ENCODE measurements at regions of chr7 and their contacts with region 1.

Region 1: GRCh38 chr7:101244375-101245146 is at the start of gene FIS1:
- DNase-seq: peak; percentile 87
- H3K4me3 Mint-ChIP-seq: peak within 1 kb of the TSS; percentile 80
- H3K27ac Mint-ChIP-seq: peak within 1 kb of the TSS; percentile 97
- H3K4me1 Mint-ChIP-seq: peaks cover 5% of the 10 kb centered on the region
- H3K27me3 Mint-ChIP-seq: no peaks in the 10 kb centered on the region
- CTCF ChIP-seq: peak; percentile 76
- total RNA-seq, gene FIS1: 213 and 221 TPM in 2 replicates

Region 2: DNA sequence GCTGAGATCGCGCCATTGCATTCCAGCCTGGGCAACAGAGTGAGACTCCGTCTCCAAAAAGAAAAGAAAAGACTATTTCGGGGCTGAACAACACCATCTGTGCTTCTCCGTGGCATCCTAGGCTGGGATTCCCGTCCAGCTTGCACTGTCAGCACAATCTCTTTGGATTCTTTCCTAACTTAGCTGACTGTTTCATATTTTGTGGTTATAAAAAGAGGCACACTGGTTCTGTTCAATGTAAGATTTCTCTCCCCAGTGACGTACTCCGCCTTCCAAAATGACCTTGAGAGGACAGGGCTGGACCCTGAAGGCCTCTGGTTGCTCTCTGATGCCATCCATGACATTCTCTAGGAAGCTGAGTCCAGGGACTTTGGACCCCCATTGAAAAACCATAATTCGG is 17.8 kb before region 1 on chr7:
- CTCF ChIA-PET with region 1: interaction called, 12 read pairs
- POLR2A ChIA-PET with region 1: interaction called, 43 read pairs
- intact Hi-C with region 1: no loop called
- DNase-seq: no peak
- H3K4me3 Mint-ChIP-seq: no peak overlapping the region
- H3K27ac Mint-ChIP-seq: no peak overlapping the region
- H3K4me1 Mint-ChIP-seq: peaks cover 6% of the 10 kb centered on the region
- H3K27me3 Mint-ChIP-seq: no peaks in the 10 kb centered on the region
- CTCF ChIP-seq: no peak

Region 3: DNA sequence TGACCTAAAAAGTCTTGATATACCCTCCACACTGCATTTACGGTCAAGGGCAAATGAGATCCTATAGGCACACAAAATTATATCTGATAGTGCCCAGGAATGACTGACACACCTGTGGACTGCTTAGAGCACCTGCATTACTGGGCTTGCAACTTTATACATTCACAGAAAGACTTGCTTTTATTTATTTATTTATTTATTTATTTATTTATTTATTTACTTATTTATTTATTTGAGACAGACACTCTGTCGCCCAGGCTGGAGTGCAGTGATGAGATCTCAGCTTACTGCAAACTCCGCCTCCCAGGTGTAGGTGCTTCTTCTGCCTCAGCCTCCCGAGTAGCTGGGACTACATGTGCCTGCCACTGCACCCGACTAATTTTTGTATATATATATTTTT is 83.6 kb after region 1 on chr7:
- CTCF ChIA-PET with region 1: no interaction called
- POLR2A ChIA-PET with region 1: no interaction called
- intact Hi-C with region 1: no loop called
- DNase-seq: no peak
- H3K4me3 Mint-ChIP-seq: no peak overlapping the region
- H3K27ac Mint-ChIP-seq: no peak overlapping the region
- H3K4me1 Mint-ChIP-seq: no peaks in the 10 kb centered on the region
- H3K27me3 Mint-ChIP-seq: no peaks in the 10 kb centered on the region
- CTCF ChIP-seq: no peak

Region 4: DNA sequence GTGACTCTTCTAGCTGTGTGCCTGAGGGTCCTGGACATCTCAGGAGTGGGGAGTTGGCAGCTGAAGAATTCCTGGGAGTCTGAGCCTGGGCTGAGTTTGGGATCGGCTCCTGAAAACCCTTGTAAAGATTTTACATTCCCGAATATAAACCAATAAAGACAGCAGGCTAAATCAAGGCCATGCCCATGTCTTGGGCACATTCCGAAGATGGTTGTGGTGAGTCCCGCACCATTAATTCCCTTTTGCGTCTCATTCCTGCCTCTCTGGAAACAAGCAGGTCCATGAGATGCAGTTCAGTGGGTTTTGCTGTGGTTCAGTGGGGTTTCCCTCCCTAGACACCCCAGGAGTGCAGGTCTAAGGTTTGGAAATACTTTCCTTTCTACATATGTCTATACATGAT is 209.1 kb after region 1 on chr7:
- CTCF ChIA-PET with region 1: no interaction called
- POLR2A ChIA-PET with region 1: no interaction called
- intact Hi-C with region 1: no loop called
- DNase-seq: no peak
- H3K4me3 Mint-ChIP-seq: no peak overlapping the region
- H3K27ac Mint-ChIP-seq: no peak overlapping the region
- H3K4me1 Mint-ChIP-seq: no peaks in the 10 kb centered on the region
- H3K27me3 Mint-ChIP-seq: peaks cover 6% of the 10 kb centered on the region
- CTCF ChIP-seq: no peak